Mammary epithelial cell (primary cell): ENCODE measurements at regions of chr15 and their contacts with region 1.

Region 1: GRCh38 chr15:84797212-84797611 is 19.9 kb upstream of the ALPK3 start:
- DNase-seq: peak; percentile 17
- H3K4me3 ChIP-seq: no peak overlapping the region
- H3K27ac ChIP-seq: no peak overlapping the region
- H3K4me1 ChIP-seq: no peaks in the 10 kb centered on the region
- H3K27me3 ChIP-seq: no peaks in the 10 kb centered on the region
- CTCF ChIP-seq: no peak

Region 2: GRCh38 chr15:84812842-84813241 is 15.6 kb after region 1 on chr15:
- CTCF ChIA-PET with region 1: no interaction called
- dilution Hi-C with region 1: no loop called
- in situ Hi-C with region 1: no loop called
- intact Hi-C with region 1: loop called (anchors 1 kb)
- DNase-seq: no peak
- H3K4me3 ChIP-seq: no peak overlapping the region
- H3K27ac ChIP-seq: no peak overlapping the region
- H3K4me1 ChIP-seq: no peaks in the 10 kb centered on the region
- H3K27me3 ChIP-seq: no peaks in the 10 kb centered on the region
- CTCF ChIP-seq: no peak